Brain microvascular endothelial cell (primary cell): ENCODE measurements at regions of chr1 and their contacts with region 1.

Region 1: DNA sequence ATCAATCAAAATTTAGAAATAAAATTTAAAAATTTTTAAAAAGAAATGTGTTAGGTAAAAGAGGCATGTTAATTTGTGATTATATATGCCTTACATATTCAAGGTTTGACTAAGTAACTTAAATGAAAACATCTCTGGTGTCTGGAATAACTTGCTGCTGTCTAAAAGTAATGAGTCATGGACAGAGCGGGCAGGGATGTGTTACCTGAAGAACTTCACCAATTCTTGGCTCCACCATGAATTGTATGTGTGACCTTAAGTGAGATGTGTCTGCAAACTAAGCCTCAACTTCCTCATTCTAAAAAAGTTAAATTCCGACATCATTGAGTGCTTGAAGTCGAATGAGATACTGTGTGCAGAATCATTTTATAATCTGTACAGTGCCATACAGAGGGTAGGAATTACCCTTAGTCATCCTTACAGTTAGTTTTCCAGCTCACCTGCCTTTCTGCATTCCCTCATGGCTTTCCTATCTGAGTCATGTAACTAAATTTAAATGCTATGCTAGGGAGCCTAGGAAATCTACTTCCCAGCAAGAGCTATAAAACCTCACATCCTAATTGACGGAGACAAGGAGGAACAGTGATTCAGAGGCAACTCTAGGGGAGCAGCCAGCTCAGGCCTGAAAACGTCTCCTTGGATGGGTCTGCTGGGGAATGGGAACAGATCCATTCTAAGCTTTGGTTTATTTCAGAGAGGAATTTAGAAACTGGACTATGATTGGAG is 100.7 kb upstream of the TSPAN2 start:
- DNase-seq: peak; percentile 54
- H3K4me3 ChIP-seq: no peak overlapping the region
- H3K27ac ChIP-seq: peak overlapping the region; percentile 4
- H3K27me3 ChIP-seq: no peaks in the 10 kb centered on the region
- CTCF ChIP-seq: no peak

Region 2: DNA sequence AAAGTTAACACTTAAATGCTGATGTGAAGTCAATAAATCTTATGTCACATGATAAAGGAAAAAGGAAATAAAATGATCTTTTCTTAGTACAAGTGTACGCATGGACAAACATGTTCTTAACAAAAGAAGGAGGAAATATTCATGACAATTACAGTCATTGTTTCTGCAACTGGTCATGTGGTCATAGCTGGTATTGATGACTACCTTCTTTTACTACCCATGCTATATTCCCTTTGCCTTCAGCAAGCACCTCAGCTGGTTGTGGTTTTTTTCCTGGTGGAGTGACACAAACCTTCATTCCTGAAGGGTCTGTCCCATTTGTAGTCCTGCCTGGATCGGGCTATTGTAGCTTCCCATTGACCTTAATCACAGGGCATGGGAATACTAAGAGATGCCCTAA is 183.8 kb before region 1 on chr1:
- in situ Hi-C with region 1: no loop called
- DNase-seq: no peak
- H3K4me3 ChIP-seq: no peak overlapping the region
- H3K27ac ChIP-seq: no peak overlapping the region
- H3K27me3 ChIP-seq: no peaks in the 10 kb centered on the region
- CTCF ChIP-seq: no peak

Region 3: GRCh38 chr1:115036814-115037507 is 153.0 kb before region 1 on chr1:
- in situ Hi-C with region 1: no loop called
- DNase-seq: no peak
- H3K4me3 ChIP-seq: no peak overlapping the region
- H3K27ac ChIP-seq: no peak overlapping the region
- H3K27me3 ChIP-seq: no peaks in the 10 kb centered on the region
- CTCF ChIP-seq: no peak

Region 4: DNA sequence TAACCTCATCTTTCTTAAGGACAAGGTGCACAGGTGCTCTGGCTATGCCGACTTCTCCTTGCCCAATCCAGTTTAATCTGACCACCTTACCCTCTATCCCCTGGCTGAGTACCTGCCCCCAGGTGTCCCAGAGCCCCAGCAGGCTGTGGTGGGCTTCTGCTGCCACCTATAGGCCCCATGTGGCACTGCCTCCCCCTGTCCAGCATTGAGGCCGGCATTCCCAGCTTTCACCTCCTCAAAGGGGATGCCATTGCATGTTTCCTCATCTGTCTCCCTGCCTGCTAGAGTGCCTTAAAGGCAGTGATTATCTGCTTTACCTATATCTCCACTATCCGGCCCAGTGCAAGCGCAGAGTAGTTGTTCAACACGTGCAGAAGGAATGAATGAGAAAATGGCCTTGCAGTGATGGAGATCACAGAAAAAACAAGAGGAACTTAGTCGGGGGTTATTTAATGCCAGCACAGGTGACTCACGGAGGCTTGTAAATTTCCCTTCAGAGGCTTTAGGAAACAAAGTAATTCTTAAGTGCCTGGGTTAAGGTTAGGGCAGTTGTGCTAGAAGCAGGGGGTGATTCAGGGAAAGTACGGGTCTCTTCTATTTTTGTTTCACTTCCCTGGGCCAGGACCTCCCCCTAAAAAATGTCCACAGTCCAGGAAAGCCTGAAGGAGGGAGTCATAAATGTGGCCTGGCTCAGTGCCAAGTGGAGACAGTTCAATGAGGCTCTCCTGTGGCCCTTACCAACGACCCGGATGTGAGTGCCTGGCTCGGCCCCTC is 279.9 kb after region 1 on chr1:
- in situ Hi-C with region 1: loop called (anchors 25 kb)
- DNase-seq: peak; percentile 66
- H3K4me3 ChIP-seq: no peak overlapping the region
- H3K27ac ChIP-seq: no peak overlapping the region
- H3K27me3 ChIP-seq: no peaks in the 10 kb centered on the region
- CTCF ChIP-seq: peak; percentile 99

Region 5: DNA sequence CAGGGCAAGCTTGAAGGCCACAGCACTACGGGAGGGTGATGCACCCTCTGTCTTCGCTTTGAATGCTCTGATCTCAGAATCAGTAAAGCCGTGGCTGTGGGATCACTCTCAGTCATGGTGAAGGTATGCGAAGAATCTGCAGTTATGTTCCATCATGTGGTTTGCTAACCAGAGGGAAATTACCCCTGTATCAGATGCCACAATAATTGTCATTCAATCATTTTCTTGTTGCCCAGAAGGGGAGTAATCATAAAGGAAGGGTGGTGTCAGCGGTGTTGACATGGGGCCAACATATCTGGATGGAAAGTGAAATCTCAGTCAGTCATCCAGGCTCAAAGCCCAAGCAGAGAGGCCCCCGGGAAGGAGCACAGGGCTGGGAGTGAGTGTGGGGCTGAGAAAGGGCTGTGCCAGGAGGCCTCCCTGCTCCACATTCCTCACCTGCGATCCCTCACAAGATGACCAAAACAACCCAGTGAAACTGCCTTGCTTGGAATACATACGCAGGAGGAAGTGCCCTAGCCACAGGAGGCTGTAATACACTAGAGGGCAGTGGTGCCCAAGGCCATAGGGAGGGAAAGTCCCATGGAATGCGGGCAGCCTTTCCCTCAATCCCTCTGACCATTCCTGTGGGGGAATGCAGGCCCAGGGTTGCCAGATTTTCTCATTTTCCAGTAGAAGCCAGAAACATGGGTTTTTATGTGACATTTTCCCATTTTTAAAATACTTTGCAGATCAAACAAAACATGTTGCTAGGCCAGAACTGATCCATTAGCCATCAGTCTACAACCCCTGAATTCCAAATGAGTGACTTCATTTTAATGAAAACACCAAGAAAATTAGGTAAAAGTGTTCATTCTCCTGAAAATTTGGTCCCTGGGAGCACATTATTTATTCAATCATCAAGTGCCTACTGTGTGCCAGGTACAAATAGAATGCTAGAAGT is 356.1 kb after region 1 on chr1:
- in situ Hi-C with region 1: no loop called
- DNase-seq: peak; percentile 94
- H3K4me3 ChIP-seq: no peak overlapping the region
- H3K27ac ChIP-seq: peak overlapping the region; percentile 91
- H3K27me3 ChIP-seq: no peaks in the 10 kb centered on the region
- CTCF ChIP-seq: peak; percentile 82

Region 6: DNA sequence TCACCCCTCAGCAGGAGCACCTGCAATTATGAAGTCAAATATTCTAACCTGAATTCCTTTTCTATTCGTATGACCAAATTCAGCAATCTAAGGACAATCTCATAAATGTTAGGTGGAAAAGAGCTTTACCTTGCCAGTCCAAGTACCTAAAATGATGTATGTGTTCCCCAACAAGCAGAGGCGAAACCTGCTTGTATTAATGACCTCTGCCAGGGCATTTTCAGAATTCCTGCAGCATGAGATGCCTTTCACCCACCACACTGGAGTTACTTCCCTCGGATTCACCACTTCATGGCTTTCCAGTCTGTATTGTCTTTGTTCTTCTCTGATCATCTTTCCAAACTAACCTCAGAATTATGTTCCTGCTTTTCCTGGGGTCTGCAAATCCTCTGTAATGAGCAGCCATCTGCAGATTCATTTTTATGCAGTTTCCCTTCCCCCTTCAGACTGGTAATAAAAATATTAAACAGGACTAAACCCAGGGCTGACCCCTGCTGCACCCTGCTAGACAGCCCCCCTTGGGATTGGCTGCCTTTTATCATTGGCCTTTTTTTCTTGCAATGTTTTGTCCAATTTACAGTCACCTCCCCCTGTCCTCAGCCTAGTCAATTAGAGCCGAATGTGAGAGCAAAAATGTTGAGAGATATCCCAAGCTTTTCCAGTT is 605.1 kb after region 1 on chr1:
- in situ Hi-C with region 1: no loop called
- DNase-seq: no peak
- H3K4me3 ChIP-seq: no peak overlapping the region
- H3K27ac ChIP-seq: no peak overlapping the region
- H3K27me3 ChIP-seq: peaks cover 2% of the 10 kb centered on the region
- CTCF ChIP-seq: no peak